Endothelial cell of umbilical vein (primary cell): ENCODE measurements at regions of chr7 and their contacts with region 1.

Region 1: GRCh38 chr7:139645572-139646523 is 122.4 kb downstream of the CLEC2L start:
- DNase-seq: peak; percentile 79
- H3K4me3 ChIP-seq: no peak overlapping the region
- H3K27ac ChIP-seq: no peak overlapping the region
- H3K4me1 ChIP-seq: peaks cover 29% of the 10 kb centered on the region
- H3K27me3 ChIP-seq: no peaks in the 10 kb centered on the region
- CTCF ChIP-seq: peak; percentile 87 to 89
- POLR2A ChIP-seq: no peak

Region 2: DNA sequence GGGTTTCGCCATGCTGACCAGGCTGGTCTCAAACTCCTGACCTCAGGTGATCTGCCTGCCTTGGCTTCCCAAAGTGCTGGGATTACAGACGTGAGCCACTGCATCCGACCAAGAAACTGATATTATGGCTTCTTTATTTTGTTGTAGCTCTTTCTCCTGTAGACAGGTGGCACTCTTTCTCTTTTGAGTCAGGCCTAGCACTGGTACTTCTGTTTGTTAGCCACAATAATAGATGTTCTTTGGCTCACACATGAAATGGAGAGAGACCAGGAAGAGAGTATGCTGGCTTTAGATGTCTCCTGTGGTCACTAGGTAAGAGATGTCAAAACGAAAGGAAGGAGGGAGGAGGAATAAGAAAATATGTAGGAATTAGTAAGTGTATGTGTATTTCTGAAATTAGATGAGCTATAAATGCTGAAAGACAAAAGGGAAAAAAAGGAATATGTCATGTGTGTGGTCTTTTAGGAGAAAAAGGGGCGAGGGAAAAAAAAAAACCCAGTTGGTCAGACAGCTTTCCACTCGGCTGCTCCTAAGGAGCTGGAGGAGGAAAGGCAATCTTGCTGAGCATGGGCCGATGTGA is 43.6 kb before region 1 on chr7:
- CTCF ChIA-PET with region 1: interaction called, 61 read pairs
- POLR2A ChIA-PET with region 1: no interaction called
- dilution Hi-C with region 1: no loop called
- intact Hi-C with region 1: loop called (anchors 1 kb)
- DNase-seq: peak; percentile 49
- H3K4me3 ChIP-seq: no peak overlapping the region
- H3K27ac ChIP-seq: no peak overlapping the region
- H3K4me1 ChIP-seq: no peaks in the 10 kb centered on the region
- H3K27me3 ChIP-seq: no peaks in the 10 kb centered on the region
- CTCF ChIP-seq: peak; percentile 35 to 54
- POLR2A ChIP-seq: no peak

Region 3: GRCh38 chr7:139680676-139681462 is 35.0 kb after region 1 on chr7:
- CTCF ChIA-PET with region 1: interaction called, 9 read pairs
- POLR2A ChIA-PET with region 1: no interaction called
- dilution Hi-C with region 1: no loop called
- intact Hi-C with region 1: loop called (anchors 1 kb)
- DNase-seq: peak; percentile 91
- H3K4me3 ChIP-seq: no peak overlapping the region
- H3K27ac ChIP-seq: peak overlapping the region; percentile 92
- H3K4me1 ChIP-seq: peaks cover 46% of the 10 kb centered on the region
- H3K27me3 ChIP-seq: no peaks in the 10 kb centered on the region
- CTCF ChIP-seq: no peak
- POLR2A ChIP-seq: peak; percentile 70

Region 4: DNA sequence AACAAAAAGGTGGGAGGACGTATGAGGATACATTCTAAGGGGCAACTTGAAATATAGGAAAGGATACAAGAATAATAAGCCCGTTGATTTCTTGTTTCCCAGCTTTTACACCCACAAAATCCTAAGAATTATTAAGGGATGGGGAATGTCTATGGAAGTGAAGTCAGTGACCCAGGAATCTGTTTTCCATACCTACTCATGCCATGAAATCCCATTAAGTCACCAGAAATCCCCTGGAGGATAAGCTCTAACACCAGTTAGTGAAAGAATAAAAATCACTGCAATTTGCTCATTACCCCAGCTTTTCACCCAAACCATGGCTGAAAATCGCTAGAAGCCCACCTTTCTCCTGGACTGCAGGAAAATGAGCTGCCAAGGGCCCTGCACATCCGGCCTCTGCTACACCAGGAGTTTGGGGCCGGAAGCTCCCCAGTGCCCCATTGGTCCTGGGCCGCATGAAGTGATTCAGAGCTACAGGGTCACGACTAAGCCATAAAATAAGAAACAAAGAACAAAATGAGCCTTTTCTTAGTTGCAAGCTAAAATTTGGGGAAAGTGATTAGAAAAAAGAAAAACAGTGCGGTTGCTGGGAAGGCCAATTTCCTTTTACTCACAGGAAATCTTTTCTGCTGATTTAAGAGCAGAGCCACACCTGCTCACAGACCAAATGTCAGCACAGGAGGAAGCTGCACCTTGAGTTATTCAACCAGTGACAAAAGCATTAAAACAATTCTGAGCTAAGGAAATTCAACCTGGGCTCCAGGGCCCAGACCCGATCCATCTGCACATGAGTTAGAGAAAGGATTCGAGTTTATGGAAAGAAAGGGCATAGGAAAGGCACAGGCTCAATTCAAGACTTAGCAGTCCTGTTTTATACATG is 91.6 kb after region 1 on chr7:
- CTCF ChIA-PET with region 1: interaction called, 18 read pairs
- POLR2A ChIA-PET with region 1: no interaction called
- dilution Hi-C with region 1: no loop called
- intact Hi-C with region 1: no loop called
- DNase-seq: peak; percentile 48
- H3K4me3 ChIP-seq: no peak overlapping the region
- H3K27ac ChIP-seq: peak overlapping the region; percentile 57
- H3K4me1 ChIP-seq: peaks cover 47% of the 10 kb centered on the region
- H3K27me3 ChIP-seq: no peaks in the 10 kb centered on the region
- CTCF ChIP-seq: no peak
- POLR2A ChIP-seq: peak; percentile 25

Region 5: GRCh38 chr7:139777948-139778841 is 132.3 kb after region 1 on chr7 and contains the start of gene HIPK2:
- CTCF ChIA-PET with region 1: interaction called, 47 read pairs
- POLR2A ChIA-PET with region 1: interaction called, 3 read pairs
- dilution Hi-C with region 1: no loop called
- intact Hi-C with region 1: loop called (anchors 1 kb)
- DNase-seq: peak; percentile 51
- H3K4me3 ChIP-seq: peak within 1 kb of the TSS; percentile 70 to 99 (median 96)
- H3K27ac ChIP-seq: peak within 1 kb of the TSS; percentile 74
- H3K4me1 ChIP-seq: peaks cover 23% of the 10 kb centered on the region
- H3K27me3 ChIP-seq: no peaks in the 10 kb centered on the region
- CTCF ChIP-seq: no peak
- POLR2A ChIP-seq: no peak
- total RNA-seq, gene HIPK2: 40.3 and 43.8 TPM in 2 replicates

Region 6: DNA sequence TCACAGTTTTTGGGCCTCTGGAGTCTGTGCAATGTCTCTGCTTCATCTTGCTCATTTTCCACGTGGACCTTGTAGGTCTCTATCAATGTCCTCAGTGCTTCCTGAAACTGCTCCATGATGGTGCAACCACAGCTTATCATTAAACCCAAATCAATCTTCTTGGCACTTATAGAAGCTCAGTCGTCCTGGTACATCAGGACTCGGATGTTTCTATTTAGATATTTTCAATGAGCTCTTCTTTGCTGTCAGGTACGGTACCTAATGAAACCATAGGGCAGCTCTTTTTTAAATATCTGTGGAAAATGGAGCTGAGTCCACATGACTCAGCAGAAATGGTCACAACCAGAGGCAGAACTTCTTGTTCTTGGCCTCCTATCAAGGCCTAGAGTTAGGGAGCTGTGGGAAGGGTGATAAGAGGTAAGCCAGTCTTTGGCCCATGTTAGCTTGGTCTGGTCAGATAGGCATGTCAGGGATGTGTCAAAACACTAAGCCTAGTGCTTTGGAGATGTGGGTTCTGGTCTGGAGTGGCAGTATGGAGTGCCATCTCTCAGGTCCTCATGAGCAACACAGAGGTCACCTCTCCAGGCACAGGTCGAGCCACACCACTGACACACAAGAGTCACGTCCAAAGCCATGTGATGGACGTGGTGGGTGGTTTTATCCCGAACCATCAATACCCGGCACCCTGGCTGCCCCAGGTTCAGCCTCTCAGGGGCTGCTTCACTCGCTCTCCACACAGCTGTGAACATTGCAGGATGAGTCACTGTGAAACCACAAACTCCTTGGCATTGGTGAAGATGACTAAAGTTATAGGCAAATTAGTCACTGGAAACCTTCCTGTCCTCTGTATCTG is 270.2 kb after region 1 on chr7:
- CTCF ChIA-PET with region 1: interaction called, 10 read pairs
- POLR2A ChIA-PET with region 1: no interaction called
- dilution Hi-C with region 1: no loop called
- intact Hi-C with region 1: loop called (anchors 2 kb)
- DNase-seq: peak; percentile 88
- H3K4me3 ChIP-seq: no peak overlapping the region
- H3K27ac ChIP-seq: peak overlapping the region; percentile 72
- H3K4me1 ChIP-seq: peaks cover 30% of the 10 kb centered on the region
- H3K27me3 ChIP-seq: peaks cover 0 to 2% of the 10 kb centered on the region in 2 experiments
- CTCF ChIP-seq: no peak
- POLR2A ChIP-seq: no peak

Region 7: DNA sequence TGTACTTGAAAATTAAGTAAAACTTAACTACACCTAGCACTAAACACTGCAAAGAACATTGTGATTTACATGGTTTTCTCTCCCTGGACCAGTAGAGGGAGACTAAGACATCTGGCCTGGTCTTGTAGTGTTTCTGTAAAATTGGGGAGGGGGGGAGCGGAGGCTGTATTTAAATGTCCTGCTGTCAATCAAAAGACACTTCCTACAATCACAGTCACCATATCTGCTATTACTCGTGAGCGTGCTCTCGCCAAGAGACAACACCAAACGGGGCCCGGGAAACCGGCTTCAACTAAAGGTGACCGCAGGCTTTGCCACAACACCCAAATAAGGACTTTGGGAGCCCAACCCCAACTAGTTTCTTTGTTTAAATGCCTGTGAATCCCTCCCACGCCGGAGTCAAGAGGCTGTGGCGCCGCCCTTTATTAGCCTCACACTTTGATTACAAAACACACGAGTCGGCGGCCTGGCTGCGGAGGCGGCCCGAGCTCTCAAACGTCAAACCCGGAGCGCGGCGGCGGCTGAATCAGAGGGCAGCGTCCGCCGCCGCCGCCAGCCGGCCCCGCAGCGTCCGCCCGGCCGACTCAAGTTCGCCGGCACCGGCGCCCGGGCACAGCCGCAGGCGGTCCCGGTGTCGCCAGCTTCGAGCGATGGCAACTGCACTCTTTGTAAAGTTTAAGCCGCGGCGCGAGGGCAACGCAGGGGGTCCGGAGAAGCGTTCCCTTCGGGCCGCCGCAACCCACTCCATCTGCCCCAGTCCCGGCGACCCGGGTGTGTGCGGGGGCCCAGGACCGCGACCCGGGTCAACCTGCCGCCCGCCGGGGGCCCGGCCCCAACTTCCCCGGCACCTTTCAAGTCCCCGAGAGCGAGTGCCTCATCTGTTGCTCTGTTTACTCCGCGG is 529.6 kb after region 1 on chr7:
- CTCF ChIA-PET with region 1: no interaction called
- POLR2A ChIA-PET with region 1: no interaction called
- dilution Hi-C with region 1: no loop called
- intact Hi-C with region 1: loop called (anchors 5 kb)
- DNase-seq: peak; percentile 95
- H3K4me3 ChIP-seq: peak overlapping the region; percentile 72 to 95 (median 94)
- H3K27ac ChIP-seq: peak overlapping the region; percentile 79
- H3K4me1 ChIP-seq: peaks cover 8% of the 10 kb centered on the region
- H3K27me3 ChIP-seq: peaks cover 0 to 3% of the 10 kb centered on the region in 2 experiments
- CTCF ChIP-seq: peak; percentile 60 to 75
- POLR2A ChIP-seq: peak; percentile 54